ENCODE measurements at regions of chr19 and their contacts with region 1.

Region 1: GRCh38 chr19:8224394-8225145 is 15.4 kb downstream of the CERS4 start:
- DNase-seq: peak; percentile 80
- H3K4me3 Mint-ChIP-seq: peak overlapping the region; percentile 67
- H3K27ac Mint-ChIP-seq: peak overlapping the region; percentile 5
- H3K4me1 Mint-ChIP-seq: peaks cover 11% of the 10 kb centered on the region
- H3K27me3 Mint-ChIP-seq: no peaks in the 10 kb centered on the region
- CTCF ChIP-seq: no peak

Region 2: DNA sequence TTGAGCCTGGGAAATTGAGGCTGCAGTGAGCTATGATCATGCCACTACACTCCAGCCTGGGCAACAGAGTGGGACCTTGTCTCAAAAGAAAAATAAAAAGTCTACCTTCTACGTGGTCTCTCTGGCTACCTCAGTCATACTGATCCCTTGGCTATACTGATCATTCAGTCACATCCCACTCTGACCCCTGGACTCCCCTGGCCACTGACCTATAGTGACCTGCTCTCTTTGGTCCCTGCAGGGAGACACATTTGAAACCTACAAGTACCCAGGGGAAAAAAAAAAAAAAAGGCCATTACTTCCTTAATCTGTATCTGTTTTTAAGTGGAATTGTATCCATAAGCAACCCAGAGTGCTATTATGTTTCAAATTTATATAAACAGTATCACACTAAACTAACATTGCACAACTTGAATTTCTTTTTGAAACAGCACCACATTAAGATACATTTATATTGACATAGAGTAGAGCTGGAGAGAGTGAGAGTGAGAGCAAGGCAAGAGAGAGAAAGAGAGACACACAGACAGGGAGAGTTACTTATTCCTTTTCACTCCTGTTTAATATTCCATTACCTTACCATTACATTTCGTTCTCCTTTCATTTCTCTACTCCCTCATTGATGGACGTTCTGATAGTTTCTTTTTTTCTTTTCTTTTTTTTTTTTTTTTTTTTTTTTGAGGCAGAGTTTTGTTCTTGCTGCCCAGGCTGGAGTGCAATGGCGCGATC is 39.1 kb before region 1 on chr19:
- CTCF ChIA-PET with region 1: interaction called, 3 read pairs
- POLR2A ChIA-PET with region 1: no interaction called
- intact Hi-C with region 1: loop called (anchors 5 kb)
- DNase-seq: no peak
- H3K4me3 Mint-ChIP-seq: no peak overlapping the region
- H3K27ac Mint-ChIP-seq: no peak overlapping the region
- H3K4me1 Mint-ChIP-seq: no peaks in the 10 kb centered on the region
- H3K27me3 Mint-ChIP-seq: no peaks in the 10 kb centered on the region
- CTCF ChIP-seq: no peak

Region 3: DNA sequence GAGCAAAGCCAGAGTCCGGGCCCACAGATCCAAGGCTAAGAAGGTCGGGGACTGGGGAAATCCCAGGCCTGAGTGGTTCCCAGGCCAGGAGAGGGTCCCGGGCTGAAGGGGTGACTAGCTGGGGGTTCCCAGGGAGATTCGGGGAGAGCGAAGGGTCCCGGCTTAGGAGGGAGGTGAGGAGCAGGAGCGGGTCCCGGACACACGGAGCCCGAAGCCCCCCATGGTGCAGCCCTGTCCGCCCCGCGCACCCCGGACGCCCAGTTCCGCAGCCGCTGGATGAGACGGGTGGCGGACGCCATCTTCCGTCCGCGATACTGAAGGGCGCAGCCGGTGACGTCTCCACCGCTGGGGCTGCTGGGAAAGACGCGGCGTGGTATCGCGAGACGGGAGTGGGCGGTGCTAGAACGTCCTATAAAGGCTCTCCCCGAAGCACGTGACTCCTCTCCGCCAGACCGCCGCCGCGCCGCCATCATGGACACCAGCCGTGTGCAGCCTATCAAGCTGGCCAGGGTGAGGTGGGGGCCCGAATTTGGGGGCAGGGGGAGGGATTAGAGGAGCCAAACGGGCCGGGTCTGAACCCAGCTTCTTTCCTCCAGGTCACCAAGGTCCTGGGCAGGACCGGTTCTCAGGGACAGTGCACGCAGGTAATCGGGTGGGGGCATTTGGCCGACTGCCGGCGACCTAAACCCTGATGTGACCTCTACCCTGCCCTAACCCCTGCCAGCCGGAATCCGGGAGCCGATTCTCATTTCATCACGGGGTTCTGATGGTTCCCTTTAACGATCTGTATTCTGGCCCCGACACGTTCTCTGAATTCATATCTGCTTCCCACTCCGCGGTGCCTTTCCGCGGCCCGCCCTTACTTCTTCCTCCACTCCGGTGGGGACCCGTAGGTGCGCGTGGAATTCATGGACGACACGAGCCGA is 96.8 kb after region 1 on chr19 and contains the starts of genes NDUFA7 and RPS28:
- CTCF ChIA-PET with region 1: no interaction called
- POLR2A ChIA-PET with region 1: no interaction called
- intact Hi-C with region 1: no loop called
- DNase-seq: peak; percentile 96
- H3K4me3 Mint-ChIP-seq: peak within 1 kb of the TSS; percentile 88
- H3K27ac Mint-ChIP-seq: peak within 1 kb of the TSS; percentile 90
- H3K4me1 Mint-ChIP-seq: peaks cover 7% of the 10 kb centered on the region
- H3K27me3 Mint-ChIP-seq: no peaks in the 10 kb centered on the region
- CTCF ChIP-seq: no peak
- total RNA-seq, gene NDUFA7: 83.2 and 91.8 TPM in 2 replicates
- total RNA-seq, gene RPS28: 2,247 and 2,362 TPM in 2 replicates

Measured in MCF 10A (cell line).